Upper lobe of right lung (tissue), 1 donor: ENCODE measurements at regions of chr12 and their contacts with region 1.

Region 1: GRCh38 chr12:9634177-9634803 is 26.6 kb upstream of the KLRB1 start:
- DNase-seq: no peak
- ATAC-seq: peak; percentile 84
- H3K4me3 ChIP-seq: no peak overlapping the region
- H3K27ac ChIP-seq: no peak overlapping the region
- H3K4me1 ChIP-seq: peaks cover 6% of the 10 kb centered on the region
- H3K27me3 ChIP-seq: no peaks in the 10 kb centered on the region
- CTCF ChIP-seq: peak; percentile 78

Region 2: DNA sequence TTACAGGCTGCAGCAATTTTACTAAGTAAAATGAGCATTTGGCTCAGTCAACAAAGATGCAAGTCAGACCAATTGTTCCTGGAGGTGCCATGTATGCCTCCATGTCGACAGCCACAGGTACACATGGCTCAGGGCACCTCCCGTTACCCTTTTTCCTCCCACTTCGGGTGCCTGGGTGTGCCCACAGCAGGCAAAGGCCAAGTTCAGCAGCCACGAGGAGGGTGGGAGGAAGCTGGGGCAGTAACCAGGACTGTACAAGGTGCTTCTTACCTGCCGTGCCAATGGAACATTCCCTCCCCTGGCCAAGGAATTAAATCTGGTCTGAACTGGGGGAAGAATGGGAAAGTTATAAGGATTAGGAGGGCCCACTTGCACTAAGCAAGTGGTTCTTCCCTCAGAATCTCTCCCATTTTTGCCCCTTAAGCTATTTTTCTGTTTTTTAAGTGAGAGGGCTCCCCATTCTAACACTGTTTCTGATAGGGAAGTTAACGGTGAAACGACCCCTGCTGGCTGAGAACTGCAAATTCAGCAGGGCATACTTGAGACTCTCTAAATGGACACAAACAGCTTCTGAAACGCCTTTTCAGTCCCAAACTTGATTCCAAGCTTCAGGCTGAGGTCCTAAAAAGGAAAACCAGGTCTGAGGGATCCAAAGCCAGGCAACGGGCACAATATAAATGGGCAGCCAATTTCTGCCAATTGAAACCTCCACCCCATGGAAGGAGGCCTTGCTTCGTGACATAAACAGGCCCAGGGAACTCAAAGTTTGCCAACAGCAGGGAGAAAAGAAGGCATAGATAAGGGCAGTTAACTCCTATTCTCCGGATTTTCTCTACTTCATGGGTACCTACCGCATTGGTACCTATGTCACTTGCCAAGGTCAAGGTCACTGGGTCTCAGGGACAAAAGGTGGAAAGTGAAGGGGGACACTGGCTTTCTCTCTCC is 73.8 kb after region 1 on chr12:
- intact Hi-C with region 1: loop called (anchors 10 kb)
- DNase-seq: no peak
- ATAC-seq: peak; percentile 85
- H3K4me3 ChIP-seq: no peak overlapping the region
- H3K27ac ChIP-seq: no peak overlapping the region
- H3K4me1 ChIP-seq: no peaks in the 10 kb centered on the region
- H3K27me3 ChIP-seq: no peaks in the 10 kb centered on the region
- CTCF ChIP-seq: peak; percentile 84